ENCODE measurements at regions of chr19 and their contacts with region 1.

Region 1: GRCh38 chr19:46513461-46514236 is 18.0 kb upstream of the PNMA8B start:
- DNase-seq: peak; percentile 82 to 89
- ATAC-seq: peak; percentile 74 to 87 (median 86)
- H3K4me3 ChIP-seq: no peak overlapping the region
- H3K27ac ChIP-seq: no peak overlapping the region
- H3K4me1 ChIP-seq: no peaks in the 10 kb centered on the region
- H3K27me3 ChIP-seq: peaks cover 0 to 4% (median 0%) of the 10 kb centered on the region in 3 donors
- CTCF ChIP-seq: peak; percentile 88

Region 2: GRCh38 chr19:46115396-46116106 is 398.1 kb before region 1 on chr19:
- intact Hi-C with region 1: no loop called
- DNase-seq: no peak
- ATAC-seq: no peak
- H3K4me3 ChIP-seq: no peak overlapping the region
- H3K27ac ChIP-seq: no peak overlapping the region
- H3K4me1 ChIP-seq: no peaks in the 10 kb centered on the region
- H3K27me3 ChIP-seq: peaks cover 2 to 34% (median 12%) of the 10 kb centered on the region in 3 donors
- CTCF ChIP-seq: no peak

Region 3: GRCh38 chr19:46271481-46272197 is 242.0 kb before region 1 on chr19:
- intact Hi-C with region 1: loop called in 1 of 2 experiments (anchors 10 kb)
- DNase-seq: no peak
- ATAC-seq: no peak
- H3K4me3 ChIP-seq: no peak overlapping the region
- H3K27ac ChIP-seq: no peak overlapping the region
- H3K4me1 ChIP-seq: no peaks in the 10 kb centered on the region
- H3K27me3 ChIP-seq: peaks cover 0 to 21% (median 0%) of the 10 kb centered on the region in 3 donors
- CTCF ChIP-seq: no peak

Region 4: DNA sequence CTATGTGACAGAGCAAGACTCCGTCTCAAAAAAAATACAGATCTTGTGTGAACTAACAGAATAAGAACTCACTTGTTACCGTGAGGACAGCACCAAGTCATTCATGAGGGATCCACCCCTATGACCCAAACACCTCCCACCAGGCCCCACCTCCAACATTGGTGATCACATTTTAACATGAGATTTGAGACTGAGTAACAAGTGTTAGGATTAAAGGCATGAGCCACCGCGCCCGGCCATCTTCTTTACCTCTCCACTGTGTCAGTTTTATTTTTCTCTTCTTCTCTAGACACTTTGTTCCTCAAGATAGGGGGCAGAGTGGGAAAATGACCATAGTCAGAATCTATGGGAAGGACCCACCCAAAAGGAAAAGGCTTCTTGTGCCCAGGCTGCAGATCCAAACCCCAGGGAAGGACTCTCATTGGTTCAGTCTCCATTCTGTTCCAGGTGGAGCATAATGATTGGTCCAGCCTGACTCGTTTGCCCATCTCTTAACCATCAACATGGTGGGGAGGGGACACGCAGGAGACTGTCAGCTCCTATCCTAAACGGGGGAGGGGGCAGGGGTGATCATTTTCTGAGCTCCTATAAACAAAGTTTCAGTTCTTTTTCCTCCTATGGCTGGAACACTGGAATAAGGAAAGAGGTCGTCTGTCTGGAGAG is 86.2 kb after region 1 on chr19:
- intact Hi-C with region 1: no loop called
- DNase-seq: no peak
- ATAC-seq: no peak
- H3K4me3 ChIP-seq: peak overlapping the region; percentile 82
- H3K27ac ChIP-seq: peak overlapping the region; percentile 97
- H3K4me1 ChIP-seq: peaks cover 15% of the 10 kb centered on the region
- H3K27me3 ChIP-seq: no peaks in the 10 kb centered on the region
- CTCF ChIP-seq: no peak